Activated T-helper 1 cell treated with anti-CD3 and anti-CD28 coated beads, Interleukin-12 subunit alpha, Interleukin-12 subunit beta, Interleukin-2, Interleukin-4 antibody, amounts not matched to agents 30 ng/mL and 10 ng/mL and 1 ng/mL, durations not matched to agents 14 hours and 24 hours and 36 hours (primary cell): ENCODE measurements at regions of chr12 and their contacts with region 1.

Region 1: GRCh38 chr12:49322708-49323523 is at the start of gene TROAP:
- DNase-seq: peak; percentile 97
- H3K4me3 Mint-ChIP-seq: peak within 1 kb of the TSS; percentile 96
- H3K27ac Mint-ChIP-seq: peak within 1 kb of the TSS; percentile 94
- H3K4me1 Mint-ChIP-seq: peaks cover 28% of the 10 kb centered on the region
- H3K27me3 Mint-ChIP-seq: peaks cover 4% of the 10 kb centered on the region
- total RNA-seq, gene TROAP: 46.0 TPM in 2 replicates

Region 2: DNA sequence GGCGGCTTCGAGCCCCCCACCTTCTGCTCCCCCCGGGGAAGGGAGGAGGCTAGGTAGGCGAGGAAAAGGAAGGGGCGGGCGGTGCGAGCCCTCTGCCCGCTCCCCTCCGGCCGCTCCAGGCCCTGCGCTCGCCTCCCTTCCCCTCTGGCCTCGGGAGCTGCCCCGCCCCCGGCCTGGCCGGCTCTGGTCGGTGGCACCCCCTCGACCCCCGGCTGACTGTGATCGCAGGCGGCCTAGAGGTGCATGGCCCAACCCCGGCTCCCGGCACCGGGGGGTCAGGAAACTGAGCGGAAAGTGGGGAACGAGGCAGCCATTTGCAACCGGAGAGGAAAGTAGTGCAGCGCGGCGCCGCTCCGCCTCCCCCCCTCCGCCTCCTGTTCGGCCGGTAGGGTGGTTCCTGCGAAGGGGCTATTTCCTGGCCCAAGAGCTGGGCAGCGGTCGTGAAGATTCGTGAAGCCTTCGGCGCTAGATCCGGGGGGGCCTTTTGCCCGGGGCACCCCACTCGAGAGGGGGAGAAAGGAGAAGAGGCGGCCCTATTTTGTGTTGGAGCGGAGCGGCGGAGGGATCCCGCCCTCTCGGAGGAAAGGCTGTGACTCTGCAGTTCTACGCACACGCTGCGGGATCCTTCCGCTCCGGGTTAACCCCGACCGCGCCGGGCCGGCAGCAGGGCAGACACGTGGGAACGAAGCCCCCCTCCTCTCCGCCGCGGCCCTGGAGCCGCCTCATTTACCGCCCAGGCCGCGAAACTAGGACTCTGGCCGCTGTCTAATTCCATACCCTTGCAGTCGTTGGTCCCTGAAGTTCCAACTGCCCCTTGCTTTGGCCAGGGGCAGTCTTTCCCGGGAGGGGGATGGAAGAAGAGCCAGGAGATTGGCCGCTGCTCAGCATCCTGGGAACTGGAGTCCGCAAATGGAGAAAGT is 262.4 kb before region 1 on chr12 and contains the start of gene KMT2D:
- intact Hi-C with region 1: loop called (anchors 5 kb)
- DNase-seq: peak; percentile 83
- H3K4me3 Mint-ChIP-seq: peak within 1 kb of the TSS; percentile 95
- H3K27ac Mint-ChIP-seq: peak within 1 kb of the TSS; percentile 95
- H3K4me1 Mint-ChIP-seq: peaks cover 48% of the 10 kb centered on the region
- H3K27me3 Mint-ChIP-seq: no peaks in the 10 kb centered on the region
- total RNA-seq, gene KMT2D: 107 and 109 TPM in 2 replicates

Region 3: GRCh38 chr12:49264738-49265515 is 58.0 kb before region 1 on chr12 and contains the start of gene TUBA1C:
- intact Hi-C with region 1: loop called (anchors 1 kb)
- DNase-seq: peak; percentile 92
- H3K4me3 Mint-ChIP-seq: peak within 1 kb of the TSS; percentile 99
- H3K27ac Mint-ChIP-seq: peak within 1 kb of the TSS; percentile 100
- H3K4me1 Mint-ChIP-seq: peaks cover 38% of the 10 kb centered on the region
- H3K27me3 Mint-ChIP-seq: no peaks in the 10 kb centered on the region
- total RNA-seq, gene TUBA1C: 261 and 270 TPM in 2 replicates

Region 4: DNA sequence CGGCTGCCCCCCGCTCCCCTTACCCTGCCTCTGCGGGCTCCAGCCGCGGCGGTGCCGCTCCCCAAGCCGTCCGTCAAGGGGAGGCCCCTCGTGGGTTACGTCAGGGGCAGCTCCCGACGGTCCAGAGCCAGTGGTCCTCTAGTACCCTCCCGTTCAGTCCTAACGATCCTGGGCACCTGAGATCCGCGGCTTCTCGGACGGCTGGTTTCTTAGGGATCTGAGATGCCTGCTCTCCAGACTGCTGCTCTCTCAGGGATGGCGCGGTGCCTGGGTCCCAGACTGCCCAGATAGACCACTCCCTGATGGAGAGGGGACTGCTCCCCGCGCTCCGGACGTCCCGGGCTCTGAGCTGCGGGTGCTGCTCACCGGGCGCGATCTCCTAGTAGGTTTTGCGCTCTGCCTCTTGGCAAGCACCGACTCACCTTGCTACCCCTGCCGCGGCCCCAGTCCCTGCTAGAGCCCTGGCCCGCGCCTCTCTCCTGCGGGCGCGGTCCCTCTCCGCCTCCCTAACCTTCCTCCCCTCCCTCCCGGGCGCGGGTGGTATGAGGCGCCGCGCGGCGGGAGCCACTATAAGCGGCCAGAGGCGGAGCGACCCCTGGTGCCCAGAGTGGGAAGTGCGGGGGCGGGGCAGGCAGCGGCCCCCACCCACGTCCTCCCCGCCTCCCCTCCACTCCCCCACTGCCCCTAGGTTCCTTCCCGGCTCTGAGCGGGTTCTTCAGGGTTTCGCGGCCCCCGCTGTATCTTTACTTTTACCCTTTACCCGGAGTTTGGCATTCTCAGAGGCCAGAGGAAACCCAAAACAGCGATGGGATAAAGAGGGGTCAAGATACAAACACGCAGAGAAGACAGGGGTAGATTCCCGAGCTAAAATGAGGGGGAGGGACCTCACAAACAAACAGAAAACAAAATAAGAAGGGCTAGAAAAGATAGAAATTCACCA is 14.0 kb after region 1 on chr12 and contains the start of gene C1QL4:
- intact Hi-C with region 1: loop called (anchors 1 kb)
- DNase-seq: peak; percentile 83
- H3K4me3 Mint-ChIP-seq: peak within 1 kb of the TSS; percentile 63
- H3K27ac Mint-ChIP-seq: peak within 1 kb of the TSS; percentile 52
- H3K4me1 Mint-ChIP-seq: peaks cover 21% of the 10 kb centered on the region
- H3K27me3 Mint-ChIP-seq: peaks cover 76% of the 10 kb centered on the region
- total RNA-seq, gene C1QL4: not detected in 2 replicates

Region 5: GRCh38 chr12:49355913-49356312 is 33.0 kb after region 1 on chr12:
- intact Hi-C with region 1: no loop called
- DNase-seq: no peak
- H3K4me3 Mint-ChIP-seq: no peak overlapping the region
- H3K27ac Mint-ChIP-seq: no peak overlapping the region
- H3K4me1 Mint-ChIP-seq: peaks cover 10% of the 10 kb centered on the region
- H3K27me3 Mint-ChIP-seq: peaks cover 45% of the 10 kb centered on the region

Region 6: GRCh38 chr12:49366652-49367380 is 43.9 kb after region 1 on chr12:
- intact Hi-C with region 1: loop called (anchors 1 kb)
- DNase-seq: peak; percentile 89
- H3K4me3 Mint-ChIP-seq: peak overlapping the region; percentile 87
- H3K27ac Mint-ChIP-seq: peak overlapping the region; percentile 94
- H3K4me1 Mint-ChIP-seq: peaks cover 48% of the 10 kb centered on the region
- H3K27me3 Mint-ChIP-seq: no peaks in the 10 kb centered on the region